ENCODE measurements at regions of chr12 and their contacts with region 1.

Region 1: GRCh38 chr12:123983822-123984485 is 10.9 kb downstream of the ZNF664 start:
- DNase-seq: no peak
- H3K4me3 ChIP-seq: no peak overlapping the region
- H3K27ac ChIP-seq: no peak overlapping the region
- H3K4me1 ChIP-seq: peaks cover 0 to 11% (median 5%) of the 10 kb centered on the region in 4 donors
- H3K27me3 ChIP-seq: no peaks in the 10 kb centered on the region
- CTCF ChIP-seq: peak in 3 of 4 experiments; percentile 37 to 56 (median 41)
- EP300 ChIP-seq: no peak
- POLR2A ChIP-seq: no peak

Region 2: GRCh38 chr12:123905319-123905925 is 78.5 kb before region 1 on chr12:
- intact Hi-C with region 1: loop called (anchors 5 kb)
- DNase-seq: no peak
- H3K4me3 ChIP-seq: no peak overlapping the region
- H3K27ac ChIP-seq: no peak overlapping the region
- H3K4me1 ChIP-seq: no peaks in the 10 kb centered on the region
- H3K27me3 ChIP-seq: peaks cover 0 to 16% (median 2%) of the 10 kb centered on the region in 3 donors
- CTCF ChIP-seq: peak; percentile 10 to 70 (median 63)
- EP300 ChIP-seq: no peak
- POLR2A ChIP-seq: no peak

Region 3: DNA sequence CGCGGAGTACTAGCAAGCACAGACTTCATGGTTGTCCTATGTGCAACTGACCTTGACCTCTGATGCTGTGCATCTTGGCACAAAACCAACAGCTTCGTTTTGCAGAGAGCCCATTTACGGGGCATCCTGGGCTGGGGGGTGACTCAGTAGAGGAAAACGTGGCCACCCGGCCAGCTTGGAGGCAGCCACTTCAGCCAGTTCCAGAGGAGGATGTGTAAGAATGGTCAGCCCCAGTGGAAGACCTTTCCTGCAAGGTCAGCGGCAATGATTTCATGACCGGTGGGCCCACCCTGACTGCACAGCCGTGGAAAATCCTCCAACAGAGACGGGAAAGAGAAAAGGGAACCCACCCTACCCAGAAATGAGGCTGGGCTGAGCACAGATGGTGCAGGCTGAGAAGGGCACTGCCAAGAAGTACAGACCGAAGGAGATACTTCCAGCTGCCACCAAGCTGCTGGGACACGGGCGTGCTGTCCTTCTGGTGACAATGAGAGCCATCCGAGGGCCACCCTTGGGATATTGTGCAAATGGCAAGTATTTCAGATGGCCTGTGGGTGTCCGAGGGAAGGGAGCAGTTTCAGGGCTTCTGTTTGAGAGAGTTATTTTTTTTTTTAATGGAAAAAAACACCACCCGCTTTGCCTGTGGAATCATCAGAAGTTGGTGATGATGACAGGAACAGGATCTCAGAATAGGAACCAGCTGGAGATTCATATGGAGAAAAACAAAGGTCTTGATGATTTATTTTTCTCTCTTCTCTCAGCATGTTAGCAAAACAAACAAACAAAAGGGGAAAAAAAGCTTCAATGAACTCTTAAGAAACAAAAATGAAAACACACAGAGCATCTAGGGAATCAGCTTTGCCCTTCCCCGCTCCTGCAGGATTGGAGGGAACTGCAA is 190.7 kb after region 1 on chr12:
- intact Hi-C with region 1: no loop called
- DNase-seq: no peak
- H3K4me3 ChIP-seq: no peak overlapping the region
- H3K27ac ChIP-seq: no peak overlapping the region
- H3K4me1 ChIP-seq: peaks cover 0 to 4% (median 0%) of the 10 kb centered on the region in 4 donors
- H3K27me3 ChIP-seq: no peaks in the 10 kb centered on the region
- CTCF ChIP-seq: no peak
- EP300 ChIP-seq: no peak
- POLR2A ChIP-seq: no peak

Measured in sigmoid colon (tissue), 7 donors.